Prostate gland (tissue), 2 donors: ENCODE measurements at regions of chr1 and their contacts with region 1.

Region 1: DNA sequence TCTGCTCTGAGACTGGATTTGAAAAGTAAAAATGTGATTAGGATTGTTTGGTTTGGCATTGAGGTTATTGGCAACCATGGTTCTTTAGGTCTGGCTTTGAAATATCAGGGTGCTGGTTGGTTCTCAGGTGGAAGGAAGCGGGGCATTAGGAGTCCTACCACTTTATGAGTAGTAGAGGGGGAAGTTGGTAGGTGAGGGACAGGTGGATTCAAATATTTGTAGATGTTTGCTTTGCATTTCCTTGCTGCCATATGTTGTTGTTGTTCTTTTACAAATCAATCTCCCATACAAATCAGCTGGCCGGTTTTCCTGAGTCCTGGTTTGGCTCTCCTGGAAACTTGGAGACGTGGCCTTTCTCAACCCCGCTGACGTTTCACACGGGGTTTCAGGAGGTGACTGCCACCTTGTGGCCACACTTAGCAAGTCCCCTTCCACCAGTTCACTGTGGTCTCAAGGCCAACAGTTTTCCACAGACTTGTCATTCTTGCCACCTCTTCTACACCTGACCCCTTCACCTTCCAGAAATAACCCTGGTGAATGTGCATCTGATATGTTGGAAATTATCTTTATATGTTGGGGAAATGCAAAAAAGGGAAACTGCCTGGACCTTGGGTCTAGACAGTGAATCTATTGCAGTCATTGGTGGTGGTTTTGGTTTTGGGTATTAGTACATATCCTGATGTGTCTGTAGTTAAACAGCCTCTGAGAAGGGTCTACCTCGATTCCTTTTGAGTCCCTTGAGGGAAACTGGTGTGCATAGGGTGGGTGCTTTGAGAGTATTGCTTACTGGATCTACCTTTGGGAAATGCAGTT is 127.0 kb upstream of the KIAA0040 start:
- DNase-seq: peak; percentile 68
- H3K4me3 ChIP-seq: no peak overlapping the region
- H3K27ac ChIP-seq: peak overlapping the region; percentile 11 to 13
- H3K4me1 ChIP-seq: no peaks in the 10 kb centered on the region
- H3K27me3 ChIP-seq: no peaks in the 10 kb centered on the region
- CTCF ChIP-seq: peak; percentile 73 to 92 (median 90)
- POLR2A ChIP-seq: no peak

Region 2: DNA sequence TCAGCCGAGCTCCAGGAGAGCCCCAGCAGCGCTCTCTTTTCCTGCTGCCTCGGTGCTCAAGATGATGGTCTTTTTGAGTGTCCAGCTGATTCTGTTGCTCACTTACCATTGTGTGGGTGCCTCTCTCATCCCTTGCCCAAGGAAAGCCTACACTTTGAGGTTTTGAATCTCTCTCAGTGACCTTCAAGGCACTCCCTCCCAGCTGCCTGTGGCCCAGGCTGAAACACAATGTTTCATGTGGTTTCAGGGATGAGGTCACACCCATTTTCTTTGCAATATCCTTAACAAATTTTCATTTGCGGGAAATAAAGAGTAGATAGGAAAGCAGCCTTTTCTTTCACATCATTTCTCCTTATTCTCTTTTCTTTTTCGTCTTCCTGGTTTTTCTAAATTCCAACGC is 283.8 kb before region 1 on chr1:
- intact Hi-C with region 1: loop called (anchors 5 kb)
- DNase-seq: no peak
- H3K4me3 ChIP-seq: no peak overlapping the region
- H3K27ac ChIP-seq: no peak overlapping the region
- H3K4me1 ChIP-seq: no peaks in the 10 kb centered on the region
- H3K27me3 ChIP-seq: no peaks in the 10 kb centered on the region
- CTCF ChIP-seq: no peak
- POLR2A ChIP-seq: no peak

Region 3: GRCh38 chr1:175154629-175155472 is 164.8 kb before region 1 on chr1:
- intact Hi-C with region 1: loop called (anchors 1 kb)
- DNase-seq: peak; percentile 70
- H3K4me3 ChIP-seq: no peak overlapping the region
- H3K27ac ChIP-seq: no peak overlapping the region
- H3K4me1 ChIP-seq: no peaks in the 10 kb centered on the region
- H3K27me3 ChIP-seq: no peaks in the 10 kb centered on the region
- CTCF ChIP-seq: peak; percentile 89 to 92 (median 92)
- POLR2A ChIP-seq: no peak